Activated naive CD4-positive, alpha-beta T cell treated with anti-CD3 and anti-CD28 coated beads for 36 hours (primary cell): ENCODE measurements at regions of chr10 and their contacts with region 1.

Region 1: DNA sequence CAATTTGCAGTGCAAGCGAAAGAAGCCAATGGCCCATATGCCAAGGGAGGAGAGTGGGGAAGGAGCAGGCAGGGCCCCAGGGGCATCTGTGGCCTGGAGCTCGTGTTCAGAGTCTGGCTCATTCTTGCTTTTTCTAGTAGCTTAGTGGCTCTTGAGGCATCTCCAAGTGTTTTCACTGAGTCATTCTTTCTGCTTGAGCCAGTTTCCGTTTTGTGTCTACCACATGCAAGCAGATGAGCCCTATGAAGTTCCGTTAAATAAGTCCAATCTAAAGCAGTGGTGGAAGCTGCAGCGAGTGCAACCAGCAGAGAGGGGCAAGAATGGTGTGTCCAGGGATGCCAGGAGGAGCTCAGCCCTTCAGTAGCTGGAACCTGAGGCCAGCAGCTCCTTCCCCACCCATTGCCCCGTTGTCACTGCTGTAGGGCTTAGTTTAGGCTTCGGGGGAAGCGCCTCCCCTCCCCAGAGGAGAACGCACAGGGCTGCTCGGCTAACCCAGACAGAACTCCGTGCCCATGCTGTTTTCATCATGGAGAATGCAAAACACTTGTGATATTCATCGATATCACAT is 57.4 kb upstream of the EBF3 start:
- DNase-seq: no peak
- H3K4me3 Mint-ChIP-seq: no peak overlapping the region
- H3K27ac Mint-ChIP-seq: no peak overlapping the region
- H3K4me1 Mint-ChIP-seq: no peaks in the 10 kb centered on the region
- H3K27me3 Mint-ChIP-seq: no peaks in the 10 kb centered on the region

Region 2: DNA sequence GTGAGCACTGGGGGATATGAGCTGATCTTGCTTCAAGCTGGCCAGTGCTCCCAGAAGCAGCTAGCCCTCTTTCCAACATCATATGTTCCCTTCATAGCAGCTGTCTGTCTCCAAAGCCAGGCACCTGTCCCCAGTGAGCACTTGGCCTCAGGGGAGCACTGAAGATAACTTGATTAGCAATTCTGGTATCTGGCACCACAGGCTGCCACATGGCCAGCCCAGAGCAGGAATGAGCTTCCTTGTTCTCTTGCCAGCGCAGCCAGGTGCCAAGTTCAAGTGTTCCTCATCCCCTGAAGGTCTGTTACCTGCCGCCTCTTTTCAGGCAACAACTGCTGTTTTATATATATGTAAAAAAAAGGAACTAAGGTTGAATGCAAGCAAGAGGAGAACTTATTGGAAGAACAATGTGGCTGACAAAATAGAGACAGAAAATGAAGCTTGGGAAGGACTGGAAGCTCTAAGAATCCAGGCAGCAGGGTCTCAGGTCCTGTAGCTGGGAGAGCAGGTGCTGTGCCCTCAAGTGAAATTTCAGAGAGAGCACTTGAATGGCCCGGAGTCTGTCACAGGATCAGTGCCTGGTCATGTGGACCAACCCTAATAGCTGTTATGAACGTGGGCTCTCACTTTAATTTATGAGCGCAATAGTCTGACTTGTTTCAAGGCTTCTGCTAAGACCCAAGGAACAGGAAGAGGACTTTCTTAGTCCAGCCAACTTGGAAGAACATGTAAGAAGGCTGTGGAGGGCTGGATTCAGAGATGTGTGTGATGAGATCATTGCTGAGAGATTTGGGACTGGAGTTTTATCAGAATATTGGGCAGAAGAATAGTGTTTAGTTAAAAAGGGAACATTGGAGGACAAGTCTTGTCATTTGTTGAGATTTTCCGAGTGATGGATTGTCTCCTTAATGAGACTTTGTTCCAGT is 381.9 kb after region 1 on chr10:
- CTCF ChIA-PET with region 1: no interaction called
- intact Hi-C with region 1: no loop called
- DNase-seq: no peak
- H3K4me3 Mint-ChIP-seq: no peak overlapping the region
- H3K27ac Mint-ChIP-seq: no peak overlapping the region
- H3K4me1 Mint-ChIP-seq: no peaks in the 10 kb centered on the region
- H3K27me3 Mint-ChIP-seq: peaks cover 11% of the 10 kb centered on the region

Region 3: GRCh38 chr10:131546086-131546810 is 1524.8 kb after region 1 on chr10:
- CTCF ChIA-PET with region 1: no interaction called
- intact Hi-C with region 1: loop called (anchors 10 kb)
- DNase-seq: no peak
- H3K4me3 Mint-ChIP-seq: no peak overlapping the region
- H3K27ac Mint-ChIP-seq: no peak overlapping the region
- H3K4me1 Mint-ChIP-seq: no peaks in the 10 kb centered on the region
- H3K27me3 Mint-ChIP-seq: peaks cover 7% of the 10 kb centered on the region